ENCODE measurements at regions of chr1 and their contacts with region 1.

Region 1: DNA sequence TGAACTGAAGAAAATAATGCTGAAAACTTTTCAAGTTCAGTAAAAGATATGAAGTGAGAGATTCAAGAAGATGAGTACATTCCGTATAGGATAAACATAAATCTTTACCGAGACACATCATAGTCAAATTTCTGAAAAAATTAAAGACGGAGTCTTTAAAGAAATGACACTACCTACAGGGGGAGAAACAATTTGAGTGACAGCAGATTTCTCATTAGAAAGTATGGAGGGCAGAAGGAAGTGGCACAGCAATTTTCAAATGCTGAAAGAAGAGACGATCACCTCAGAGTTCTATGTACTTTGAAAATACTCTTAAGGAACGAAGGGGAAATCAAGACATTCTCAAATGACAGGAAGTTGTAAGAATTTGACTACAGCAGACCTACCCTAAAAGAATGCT is 271.2 kb downstream of the ZP4 start:
- DNase-seq: no peak
- H3K4me3 Mint-ChIP-seq: no peak overlapping the region
- H3K27ac Mint-ChIP-seq: no peak overlapping the region
- H3K4me1 Mint-ChIP-seq: no peaks in the 10 kb centered on the region
- H3K27me3 Mint-ChIP-seq: no peaks in the 10 kb centered on the region
- CTCF ChIP-seq: no peak

Region 2: DNA sequence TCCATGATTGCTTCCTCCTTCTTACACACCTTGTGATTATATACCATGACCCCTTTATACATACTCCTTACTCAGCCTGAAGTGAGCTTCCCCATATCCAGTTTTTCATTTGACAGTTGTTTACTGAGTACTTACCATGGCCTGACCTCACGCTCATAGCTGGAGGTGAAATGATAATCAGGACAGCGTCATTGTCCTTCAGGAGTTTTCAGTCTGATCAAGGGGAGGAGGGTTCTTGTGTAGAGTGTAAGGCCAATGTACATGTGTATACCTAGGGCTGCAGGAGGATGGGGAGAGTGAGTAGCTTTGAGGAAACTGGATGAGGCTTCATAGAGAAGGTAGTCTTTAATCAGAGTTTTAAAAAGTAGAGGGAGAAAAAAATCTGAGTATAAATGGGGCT is 251.8 kb before region 1 on chr1:
- CTCF ChIA-PET with region 1: no interaction called
- intact Hi-C with region 1: loop called (anchors 5 kb)
- DNase-seq: no peak
- H3K4me3 Mint-ChIP-seq: no peak overlapping the region
- H3K27ac Mint-ChIP-seq: no peak overlapping the region
- H3K4me1 Mint-ChIP-seq: no peaks in the 10 kb centered on the region
- H3K27me3 Mint-ChIP-seq: no peaks in the 10 kb centered on the region
- CTCF ChIP-seq: no peak

Measured in Calu3 (cell line).